T-cell (primary cell): ENCODE measurements at regions of chr18 and their contacts with region 1.

Region 1: DNA sequence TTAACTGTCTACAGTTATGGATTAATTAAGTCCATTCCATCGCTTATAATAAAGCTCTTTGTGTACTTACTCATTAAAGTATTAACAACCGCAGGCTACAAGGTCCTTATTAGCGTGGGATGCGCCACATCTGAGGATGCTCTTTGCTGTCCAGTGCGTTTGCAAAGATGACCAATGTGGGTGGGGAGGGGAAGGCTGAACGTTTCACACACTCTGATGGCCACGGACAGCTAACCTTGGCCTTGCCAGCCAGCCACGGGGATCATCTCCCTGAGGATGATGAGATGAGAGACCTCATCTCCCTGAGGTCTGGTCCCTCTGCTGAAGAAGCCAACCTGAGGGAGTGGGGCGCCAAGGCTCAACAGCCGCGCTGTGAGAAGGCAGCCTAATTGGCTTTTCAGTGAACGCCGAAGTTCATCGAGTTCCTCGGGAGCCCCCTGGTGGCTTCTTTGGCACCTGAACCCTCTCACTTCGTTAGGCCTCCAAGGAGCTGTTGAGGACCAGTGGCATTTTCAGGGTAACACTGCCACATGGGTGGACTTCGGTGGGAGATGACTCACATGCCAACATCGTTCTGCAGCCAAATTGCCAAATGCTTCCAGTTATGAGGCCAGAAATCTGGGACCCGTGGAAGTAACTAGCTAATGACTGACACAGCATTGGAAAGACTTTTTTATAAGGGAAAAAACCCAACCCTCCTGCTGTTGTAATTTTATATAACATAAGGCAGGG is 69.3 kb upstream of the SEC11C start:
- DNase-seq: peak; percentile 29 to 79 (median 66)
- ATAC-seq: peak; percentile 66 to 77 (median 75)
- H3K4me3 ChIP-seq: no peak overlapping the region
- H3K4me3 Mint-ChIP-seq: no peak overlapping the region
- H3K27ac ChIP-seq: no peak overlapping the region
- H3K27ac Mint-ChIP-seq: no peak overlapping the region
- H3K4me1 ChIP-seq: peaks cover 0 to 3% of the 10 kb centered on the region in 2 experiments
- H3K4me1 Mint-ChIP-seq: no peaks in the 10 kb centered on the region
- H3K27me3 ChIP-seq: peaks cover 0 to 6% of the 10 kb centered on the region in 2 experiments
- H3K27me3 Mint-ChIP-seq: peaks cover 0 to 20% of the 10 kb centered on the region in 2 donors

Region 2: GRCh38 chr18:58781627-58782194 is 288.6 kb before region 1 on chr18:
- CTCF ChIA-PET with region 1: interaction called, 16 to 29 read pairs
- POLR2A ChIA-PET with region 1: no interaction called
- DNase-seq: peak; percentile 12 to 79 (median 51)
- ATAC-seq: peak; percentile 47 to 80 (median 76)
- H3K4me3 ChIP-seq: no peak overlapping the region
- H3K4me3 Mint-ChIP-seq: no peak overlapping the region
- H3K27ac ChIP-seq: no peak overlapping the region
- H3K27ac Mint-ChIP-seq: peak overlapping the region in 1 of 2 donors; percentile 2
- H3K4me1 ChIP-seq: no peaks in the 10 kb centered on the region
- H3K4me1 Mint-ChIP-seq: peaks cover 0 to 4% (median 0%) of the 10 kb centered on the region in 3 donors
- H3K27me3 ChIP-seq: peaks cover 0 to 35% of the 10 kb centered on the region in 2 experiments
- H3K27me3 Mint-ChIP-seq: peaks cover 22 to 46% of the 10 kb centered on the region in 2 donors

Region 3: GRCh38 chr18:59051470-59052165 is 18.7 kb before region 1 on chr18:
- CTCF ChIA-PET with region 1: no interaction called
- POLR2A ChIA-PET with region 1: no interaction called
- DNase-seq: no peak
- ATAC-seq: no peak
- H3K4me3 ChIP-seq: no peak overlapping the region
- H3K4me3 Mint-ChIP-seq: no peak overlapping the region
- H3K27ac ChIP-seq: no peak overlapping the region
- H3K27ac Mint-ChIP-seq: no peak overlapping the region
- H3K4me1 ChIP-seq: no peaks in the 10 kb centered on the region
- H3K4me1 Mint-ChIP-seq: no peaks in the 10 kb centered on the region
- H3K27me3 ChIP-seq: peaks cover 0 to 21% of the 10 kb centered on the region in 2 experiments
- H3K27me3 Mint-ChIP-seq: peaks cover 26 to 28% of the 10 kb centered on the region in 2 donors